OCI-LY7 (cell line): ENCODE measurements at regions of chr4 and their contacts with region 1.

Region 1: DNA sequence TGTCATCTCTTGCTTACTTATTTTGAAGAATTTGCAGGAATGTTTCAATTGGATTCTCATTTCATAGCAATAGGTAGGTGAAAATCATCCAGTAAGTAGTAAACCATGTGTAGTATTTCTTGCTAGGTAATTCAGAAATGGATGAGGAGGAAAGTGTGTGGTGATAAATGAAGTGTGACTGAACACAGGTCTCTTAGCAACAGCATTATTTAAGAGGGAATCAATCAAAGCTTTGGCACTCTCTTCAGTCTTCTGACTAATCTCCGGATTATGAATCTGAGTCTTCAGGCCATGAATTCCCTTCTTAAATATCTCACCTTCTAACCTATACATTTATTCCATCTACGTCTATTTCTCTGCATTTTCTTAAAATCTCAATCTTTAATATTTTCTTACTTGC is 55.8 kb upstream of the ARHGAP24 start:
- DNase-seq: no peak
- H3K4me3 ChIP-seq: no peak overlapping the region
- H3K27ac ChIP-seq: no peak overlapping the region
- H3K4me1 ChIP-seq: no peaks in the 10 kb centered on the region
- CTCF ChIP-seq: no peak

Region 2: DNA sequence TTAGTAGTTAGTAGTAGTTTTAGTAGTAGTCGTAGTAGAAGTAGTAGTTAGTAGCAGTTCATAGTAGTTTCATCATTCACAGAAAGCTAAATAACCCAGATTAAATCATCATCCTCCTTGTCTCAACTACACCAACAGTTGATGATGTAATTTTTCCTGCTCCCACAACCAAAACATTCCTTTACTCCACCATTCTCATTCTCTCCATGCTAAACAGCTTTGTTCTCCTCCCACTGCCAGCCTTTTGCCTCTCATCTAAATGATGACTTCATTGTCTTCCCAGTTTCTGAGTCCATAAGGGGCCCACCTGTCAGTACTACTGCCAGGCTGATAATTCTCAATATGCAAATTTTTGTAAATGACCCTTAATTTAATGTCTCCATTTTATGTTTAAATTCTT is 124.7 kb after region 1 on chr4:
- CTCF ChIA-PET with region 1: no interaction called
- POLR2A ChIA-PET with region 1: no interaction called
- intact Hi-C with region 1: loop called (anchors 5 kb)
- DNase-seq: no peak
- H3K4me3 ChIP-seq: no peak overlapping the region
- H3K27ac ChIP-seq: no peak overlapping the region
- H3K4me1 ChIP-seq: no peaks in the 10 kb centered on the region
- CTCF ChIP-seq: no peak